HCT116 (cell line): ENCODE measurements at regions of chr11 and their contacts with region 1.

Region 1: DNA sequence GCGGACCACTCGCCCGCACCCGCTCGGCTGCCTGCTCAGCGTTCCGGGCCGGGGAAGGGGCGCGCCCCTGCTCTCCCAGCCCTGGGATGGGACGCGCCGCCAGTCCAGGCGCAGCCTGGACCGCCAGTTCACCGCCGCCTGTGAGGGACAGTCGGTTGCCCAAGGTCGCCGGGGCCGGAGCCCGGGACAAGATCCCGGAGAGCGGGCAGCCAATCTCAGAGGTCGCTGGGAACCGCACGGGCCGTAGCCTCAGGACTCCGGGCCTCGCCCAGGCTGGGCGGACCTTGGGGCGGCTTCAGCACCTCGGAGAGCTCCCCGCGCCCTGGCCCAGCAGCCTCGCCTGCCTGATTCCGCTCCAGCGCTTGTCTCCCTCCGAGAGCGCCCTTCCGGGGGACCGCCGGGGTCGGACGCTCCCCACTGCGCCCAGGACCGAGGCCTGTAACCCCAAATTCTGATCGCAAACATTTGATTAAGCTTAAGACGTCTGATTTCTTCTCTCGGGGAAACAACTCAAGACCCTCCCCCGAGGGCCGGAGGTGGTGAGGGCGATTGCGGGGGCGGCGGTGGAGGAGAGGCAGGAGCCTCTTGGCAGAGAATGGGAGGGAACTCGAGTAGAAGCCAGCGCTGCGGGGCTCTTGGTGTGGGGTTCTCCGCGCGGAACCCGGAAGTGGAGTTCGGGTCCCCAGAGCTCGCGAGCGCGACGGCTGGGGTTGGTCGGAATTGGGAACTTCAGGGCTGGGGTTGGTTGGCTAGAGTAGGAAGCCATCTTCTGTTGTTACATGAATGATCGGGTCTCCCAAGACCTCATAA is 1.1 kb upstream of the CHRM4 start:
- DNase-seq: no peak
- ATAC-seq: peak; percentile 72
- H3K4me3 ChIP-seq: peak overlapping the region in 1 of 2 experiments; percentile 28; a peak in 1 of 4 replicates
- H3K27ac ChIP-seq: no peak overlapping the region
- H3K4me1 ChIP-seq: peaks cover 3 to 38% of the 10 kb centered on the region in 2 experiments; a peak in 3 of 4 replicates
- H3K27me3 ChIP-seq: no peaks in the 10 kb centered on the region
- CTCF ChIP-seq: no peak
- POLR2A ChIP-seq: no peak
- RAD21 ChIP-seq: no peak

Region 2: GRCh38 chr11:46529095-46529905 is 136.7 kb after region 1 on chr11:
- CTCF ChIA-PET with region 1: interaction called, 8 read pairs
- POLR2A ChIA-PET with region 1: no interaction called
- RAD21 ChIA-PET with region 1: interaction called in 1 of 2 experiments, 3 read pairs
- intact Hi-C with region 1: loop called (anchors 2 kb)
- DNase-seq: peak; percentile 49
- ATAC-seq: peak; percentile 97
- H3K4me3 ChIP-seq: no peak overlapping the region
- H3K27ac ChIP-seq: no peak overlapping the region
- H3K4me1 ChIP-seq: peaks cover 0 to 4% of the 10 kb centered on the region in 2 experiments; a peak in 1 of 4 replicates
- H3K27me3 ChIP-seq: no peaks in the 10 kb centered on the region
- CTCF ChIP-seq: peak; percentile 90 to 96 (median 93)
- POLR2A ChIP-seq: no peak
- RAD21 ChIP-seq: peak; percentile 61

Region 3: GRCh38 chr11:46537537-46538295 is 145.1 kb after region 1 on chr11:
- CTCF ChIA-PET with region 1: interaction called, 4 read pairs
- POLR2A ChIA-PET with region 1: no interaction called
- RAD21 ChIA-PET with region 1: no interaction called
- intact Hi-C with region 1: loop called (anchors 1 kb)
- DNase-seq: peak; percentile 68
- ATAC-seq: peak; percentile 97
- H3K4me3 ChIP-seq: no peak overlapping the region
- H3K27ac ChIP-seq: no peak overlapping the region
- H3K4me1 ChIP-seq: peaks cover 0 to 7% of the 10 kb centered on the region in 2 experiments; a peak in 1 of 4 replicates
- H3K27me3 ChIP-seq: no peaks in the 10 kb centered on the region
- CTCF ChIP-seq: peak; percentile 80 to 97 (median 97)
- POLR2A ChIP-seq: no peak
- RAD21 ChIP-seq: peak; percentile 82

Region 4: GRCh38 chr11:46564459-46564858 is 171.8 kb after region 1 on chr11:
- CTCF ChIA-PET with region 1: no interaction called
- POLR2A ChIA-PET with region 1: no interaction called
- RAD21 ChIA-PET with region 1: no interaction called
- intact Hi-C with region 1: no loop called
- DNase-seq: no peak
- ATAC-seq: peak; percentile 58
- H3K4me3 ChIP-seq: no peak overlapping the region
- H3K27ac ChIP-seq: no peak overlapping the region; the same call in 1 of the 2 replicates
- H3K4me1 ChIP-seq: peaks cover 23 to 41% of the 10 kb centered on the region in 2 experiments
- H3K27me3 ChIP-seq: no peaks in the 10 kb centered on the region
- CTCF ChIP-seq: no peak
- POLR2A ChIP-seq: no peak
- RAD21 ChIP-seq: no peak

Region 5: GRCh38 chr11:46616998-46617675 is 224.5 kb after region 1 on chr11 and contains the starts of genes ATG13 and HARBI1:
- CTCF ChIA-PET with region 1: no interaction called
- POLR2A ChIA-PET with region 1: no interaction called
- RAD21 ChIA-PET with region 1: no interaction called
- intact Hi-C with region 1: loop called (anchors 10 kb)
- DNase-seq: peak; percentile 82
- ATAC-seq: peak; percentile 95
- H3K4me3 ChIP-seq: peak within 1 kb of the TSS; percentile 71 to 99
- H3K27ac ChIP-seq: peak within 1 kb of the TSS; percentile 73
- H3K4me1 ChIP-seq: peaks cover 13 to 23% of the 10 kb centered on the region in 2 experiments
- H3K27me3 ChIP-seq: no peaks in the 10 kb centered on the region
- CTCF ChIP-seq: no peak
- POLR2A ChIP-seq: peak; percentile 14
- RAD21 ChIP-seq: no peak; the same call in 1 of the 2 replicates
- total RNA-seq, gene ATG13: 69.2 TPM
- total RNA-seq, gene HARBI1: 1.9 TPM

Region 6: DNA sequence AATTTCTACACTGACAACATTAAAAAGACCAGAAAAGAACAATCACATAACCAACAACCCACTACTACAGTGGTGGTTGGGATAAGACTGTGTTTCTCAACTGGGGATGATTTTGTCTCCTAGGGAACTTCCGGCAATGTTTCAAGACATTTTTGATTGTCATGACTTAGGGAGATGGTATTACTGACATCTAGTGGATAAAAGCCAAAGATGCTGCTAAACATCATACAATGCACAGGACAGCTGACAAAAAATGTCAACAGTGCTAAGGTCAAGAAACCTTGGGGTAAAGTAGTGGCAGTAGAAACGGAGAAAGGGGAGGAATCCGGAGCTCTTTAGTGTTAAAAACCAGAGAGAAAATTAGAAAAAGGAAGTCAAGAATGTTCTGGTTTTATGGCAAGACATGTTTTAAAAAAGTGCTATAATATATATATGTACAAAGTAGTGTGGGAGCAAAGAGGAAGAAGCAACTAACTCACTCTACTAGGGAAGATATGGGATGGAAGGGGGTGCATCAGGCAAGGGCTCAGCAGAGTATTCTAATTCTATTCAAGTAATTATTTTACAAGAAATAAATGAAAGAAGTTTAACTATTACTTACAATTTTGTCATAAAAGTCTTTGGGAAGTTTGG is 416.3 kb after region 1 on chr11:
- CTCF ChIA-PET with region 1: no interaction called
- POLR2A ChIA-PET with region 1: no interaction called
- RAD21 ChIA-PET with region 1: no interaction called
- intact Hi-C with region 1: loop called (anchors 10 kb)
- DNase-seq: peak; percentile 13
- ATAC-seq: peak; percentile 75
- H3K4me3 ChIP-seq: no peak overlapping the region
- H3K27ac ChIP-seq: no peak overlapping the region
- H3K4me1 ChIP-seq: no peaks in the 10 kb centered on the region
- H3K27me3 ChIP-seq: no peaks in the 10 kb centered on the region
- CTCF ChIP-seq: peak; percentile 19 to 60 (median 57); a peak in 5 of 6 replicates
- POLR2A ChIP-seq: no peak
- RAD21 ChIP-seq: peak; percentile 48